ENCODE measurements at regions of chr9 and their contacts with region 1.

Region 1: GRCh38 chr9:27276193-27277030 is 20.5 kb downstream of the EQTN start:
- DNase-seq: peak; percentile 16
- H3K4me3 ChIP-seq: no peak overlapping the region
- H3K27ac ChIP-seq: no peak overlapping the region
- H3K27me3 ChIP-seq: peaks cover 13% of the 10 kb centered on the region
- CTCF ChIP-seq: peak; percentile 71

Region 2: DNA sequence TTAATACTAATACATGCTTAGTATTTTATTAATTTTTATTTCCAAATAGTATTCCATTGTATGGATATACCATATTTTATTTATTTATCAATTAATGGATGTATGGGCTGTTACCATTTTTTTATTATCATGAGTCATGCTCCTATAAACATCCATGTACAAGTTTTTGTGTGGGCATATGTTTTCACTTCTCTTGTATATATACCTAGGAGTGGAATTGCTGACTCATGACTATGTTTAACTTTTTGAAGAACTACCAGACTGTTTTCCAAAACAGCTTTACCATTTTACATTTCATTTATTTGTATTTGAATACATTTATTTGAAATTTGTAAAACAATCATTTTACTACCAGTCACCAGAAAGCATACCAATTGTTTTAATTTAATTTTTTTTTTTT is 256.8 kb before region 1 on chr9:
- CTCF ChIA-PET with region 1: interaction called, 11 read pairs
- POLR2A ChIA-PET with region 1: no interaction called
- DNase-seq: peak; percentile 63
- H3K4me3 ChIP-seq: no peak overlapping the region
- H3K27ac ChIP-seq: no peak overlapping the region
- H3K27me3 ChIP-seq: no peaks in the 10 kb centered on the region
- CTCF ChIP-seq: no peak

Region 3: DNA sequence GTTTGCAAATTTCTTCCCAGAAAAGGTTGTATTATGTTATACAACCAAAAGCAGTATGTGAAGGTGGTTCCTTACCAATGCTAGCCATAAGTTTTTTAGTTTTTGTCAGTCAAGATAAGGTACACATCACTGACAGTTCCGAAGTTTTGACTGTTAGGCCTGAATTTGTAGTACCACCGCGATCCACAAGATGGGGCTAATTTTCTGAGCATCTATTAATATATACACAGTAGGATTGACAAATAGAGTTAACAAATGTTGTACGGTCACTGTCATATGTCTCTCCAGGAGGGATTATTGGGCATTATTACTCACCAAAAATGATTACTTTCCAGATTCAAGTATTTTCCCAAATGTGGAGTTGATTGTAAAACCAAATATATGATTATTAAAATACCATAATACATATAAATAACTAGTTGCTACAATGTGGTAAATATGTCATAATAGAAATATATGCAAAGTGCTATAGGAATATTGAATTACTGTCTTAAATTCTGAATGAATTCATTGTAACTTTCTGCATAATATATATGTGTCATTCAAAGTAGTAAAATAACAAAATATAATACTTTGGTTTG is 242.5 kb before region 1 on chr9:
- CTCF ChIA-PET with region 1: interaction called, 26 read pairs
- POLR2A ChIA-PET with region 1: no interaction called
- DNase-seq: peak; percentile 18
- H3K4me3 ChIP-seq: no peak overlapping the region
- H3K27ac ChIP-seq: no peak overlapping the region
- H3K27me3 ChIP-seq: no peaks in the 10 kb centered on the region
- CTCF ChIP-seq: peak; percentile 82

Region 4: DNA sequence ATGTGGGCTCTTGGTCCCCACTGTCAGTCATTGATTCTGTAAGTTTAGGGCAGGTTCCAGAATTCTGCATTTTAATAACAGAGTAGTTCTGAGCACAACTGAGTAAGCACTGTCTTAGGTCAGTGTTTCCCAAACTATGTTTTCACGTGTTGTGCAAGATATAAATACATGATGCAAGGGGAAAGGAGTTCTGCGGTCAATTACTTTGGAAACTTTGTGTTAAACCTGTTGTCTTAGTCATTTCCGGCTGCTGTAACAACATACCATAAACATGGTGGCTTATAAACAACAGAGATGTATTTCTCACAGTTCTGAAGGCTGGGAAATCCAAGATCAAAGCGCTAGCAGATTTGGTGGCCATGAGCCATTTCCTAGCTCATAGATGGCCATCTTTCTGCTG is 49.2 kb before region 1 on chr9:
- CTCF ChIA-PET with region 1: no interaction called
- POLR2A ChIA-PET with region 1: no interaction called
- DNase-seq: peak; percentile 75
- H3K4me3 ChIP-seq: no peak overlapping the region
- H3K27ac ChIP-seq: peak overlapping the region; percentile 77
- H3K27me3 ChIP-seq: no peaks in the 10 kb centered on the region
- CTCF ChIP-seq: no peak

Region 5: GRCh38 chr9:27261517-27262211 is 14.7 kb before region 1 on chr9:
- CTCF ChIA-PET with region 1: interaction called, 30 read pairs
- POLR2A ChIA-PET with region 1: no interaction called
- DNase-seq: peak; percentile 11
- H3K4me3 ChIP-seq: no peak overlapping the region
- H3K27ac ChIP-seq: no peak overlapping the region
- H3K27me3 ChIP-seq: peaks cover 9% of the 10 kb centered on the region
- CTCF ChIP-seq: no peak

Region 6: DNA sequence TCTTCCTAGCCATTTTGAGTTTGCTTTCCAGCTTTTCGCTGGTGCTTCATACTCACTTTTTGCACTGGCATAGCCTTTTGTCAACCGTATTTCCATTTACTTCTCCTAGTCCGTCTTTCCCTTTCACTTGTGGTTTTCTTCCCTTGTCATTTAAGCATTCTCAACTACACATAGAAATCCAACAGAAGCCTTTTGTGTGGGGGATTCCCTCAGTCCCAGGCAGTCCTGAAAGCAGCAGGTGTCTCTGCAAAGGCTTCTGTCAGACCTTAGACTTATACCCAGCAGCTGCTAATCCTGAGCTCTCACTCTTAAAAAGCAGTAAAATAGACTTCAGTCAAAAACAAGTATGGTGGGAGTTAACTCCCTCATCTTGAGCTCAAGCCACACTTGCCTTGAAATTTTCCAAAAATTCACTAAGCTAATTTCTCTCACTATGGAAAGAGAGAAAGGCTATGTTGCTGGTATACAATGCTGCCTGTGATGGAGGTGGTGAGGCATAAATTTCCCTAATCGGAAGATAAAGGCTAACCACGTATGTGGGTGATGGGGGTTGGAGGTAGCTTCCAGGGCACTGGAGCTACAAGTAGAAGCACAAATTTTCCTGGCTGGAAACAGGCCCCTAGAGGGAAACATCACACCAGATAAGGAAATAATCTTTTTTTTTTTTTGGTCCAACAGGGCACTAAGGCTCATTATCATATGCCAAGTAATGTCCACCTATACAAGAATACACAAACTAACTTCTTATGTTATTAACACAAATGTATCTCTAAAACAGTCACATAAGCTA is 212.9 kb after region 1 on chr9:
- CTCF ChIA-PET with region 1: no interaction called
- POLR2A ChIA-PET with region 1: no interaction called
- DNase-seq: no peak
- H3K4me3 ChIP-seq: no peak overlapping the region
- H3K27ac ChIP-seq: no peak overlapping the region
- H3K27me3 ChIP-seq: no peaks in the 10 kb centered on the region
- CTCF ChIP-seq: no peak

Region 7: GRCh38 chr9:27499481-27499880 is 223.1 kb after region 1 on chr9:
- CTCF ChIA-PET with region 1: no interaction called
- POLR2A ChIA-PET with region 1: no interaction called
- DNase-seq: no peak
- H3K4me3 ChIP-seq: no peak overlapping the region
- H3K27ac ChIP-seq: no peak overlapping the region
- H3K27me3 ChIP-seq: peaks cover 2% of the 10 kb centered on the region
- CTCF ChIP-seq: no peak

Measured in AG04450 (cell line).